ENCODE measurements at regions of chr11 and their contacts with region 1.

Region 1: GRCh38 chr11:32751381-32751780 is 43.1 kb downstream of the CCDC73 start:
- DNase-seq: no peak
- H3K4me3 ChIP-seq: no peak overlapping the region
- H3K27ac ChIP-seq: no peak overlapping the region
- H3K4me1 ChIP-seq: no peaks in the 10 kb centered on the region
- H3K27me3 ChIP-seq: no peaks in the 10 kb centered on the region
- CTCF ChIP-seq: no peak
- EP300 ChIP-seq: no peak
- POLR2A ChIP-seq: no peak

Region 2: DNA sequence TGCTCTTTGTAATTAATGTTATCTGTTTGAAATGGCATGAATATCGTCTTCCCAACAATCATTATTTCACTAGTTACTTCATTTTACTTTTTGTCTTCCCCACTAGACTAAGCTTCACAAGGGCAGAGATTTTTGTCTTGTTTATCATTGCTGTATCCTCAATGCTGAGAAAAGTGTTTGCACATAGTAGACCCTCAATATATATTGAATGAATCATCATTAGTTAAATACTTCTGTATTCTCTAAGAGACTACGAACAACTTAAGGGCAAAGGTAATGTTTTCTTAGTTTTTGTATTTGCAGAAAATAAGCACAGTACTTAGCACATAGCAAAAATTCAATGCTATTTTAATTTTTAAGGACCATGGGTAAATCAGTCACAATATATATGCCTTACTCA is 52.8 kb before region 1 on chr11:
- in situ Hi-C with region 1: loop called in 1 of 4 experiments (anchors 10 kb)
- intact Hi-C with region 1: no loop called
- DNase-seq: no peak
- H3K4me3 ChIP-seq: no peak overlapping the region
- H3K27ac ChIP-seq: no peak overlapping the region
- H3K4me1 ChIP-seq: no peaks in the 10 kb centered on the region
- H3K27me3 ChIP-seq: no peaks in the 10 kb centered on the region
- CTCF ChIP-seq: no peak
- EP300 ChIP-seq: no peak
- POLR2A ChIP-seq: no peak